Heart right ventricle (tissue), 16 donors: ENCODE measurements at regions of chr12 and their contacts with region 1.

Region 1: DNA sequence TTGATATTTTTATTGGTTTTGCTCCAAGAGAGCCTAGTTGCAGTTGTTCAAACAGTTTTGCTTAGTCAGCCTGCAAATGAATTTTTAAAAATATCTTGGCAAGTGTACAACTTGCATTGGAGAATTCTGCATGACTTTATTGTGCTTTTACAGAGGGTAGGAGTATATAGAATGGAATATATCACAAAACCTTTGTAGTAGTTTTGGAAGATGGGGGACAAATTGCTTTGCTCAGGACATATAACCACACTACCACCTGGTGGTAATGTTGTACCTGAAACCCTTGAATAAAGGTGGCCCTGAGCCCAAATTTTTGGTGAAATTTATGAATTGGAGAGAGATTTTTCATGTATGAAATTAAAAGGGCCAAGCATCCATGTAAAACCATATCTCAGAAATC is 645.2 kb downstream of the MED13L start:
- DNase-seq: no peak
- ATAC-seq: no peak
- H3K4me3 ChIP-seq: no peak overlapping the region
- H3K27ac ChIP-seq: no peak overlapping the region
- H3K4me1 ChIP-seq: peaks cover 0 to 9% (median 0%) of the 10 kb centered on the region in 9 donors
- H3K27me3 ChIP-seq: no peaks in the 10 kb centered on the region
- CTCF ChIP-seq: peak in 7 of 9 donors; percentile 20 to 58 (median 41)

Region 2: DNA sequence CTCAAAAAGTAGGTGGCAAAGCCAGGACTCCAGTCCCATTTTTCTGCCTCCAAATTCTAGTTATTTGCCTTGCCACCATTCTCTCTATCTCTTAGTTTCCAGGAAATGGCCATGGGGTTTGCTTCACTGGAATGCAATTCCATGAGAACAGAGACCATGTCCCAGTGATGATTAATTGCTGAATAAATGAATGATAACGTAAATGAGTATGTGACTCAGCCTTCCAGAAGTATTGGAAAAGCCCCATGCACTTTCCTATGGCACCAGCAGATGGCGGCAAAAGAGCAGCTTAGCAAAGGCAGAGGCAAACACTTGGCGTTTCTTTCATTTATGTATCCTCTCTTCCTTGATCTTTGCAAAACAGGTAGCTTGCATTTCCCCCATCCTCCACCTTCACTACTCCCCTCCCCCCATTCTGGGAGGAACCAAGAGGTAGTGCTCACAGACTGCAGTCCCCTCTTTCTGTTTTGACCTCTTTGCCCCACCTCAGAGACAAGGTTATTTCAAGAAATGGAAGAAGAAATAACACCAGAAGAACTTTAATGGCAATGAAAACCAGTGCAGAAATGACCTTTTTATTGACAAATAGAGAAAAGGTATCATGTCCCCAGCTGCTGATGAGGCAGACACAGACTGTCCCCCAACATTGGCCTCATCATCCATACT is 969.7 kb before region 1 on chr12:
- intact Hi-C with region 1: loop called in 8 of 10 experiments (anchors 5 to 10 kb)
- DNase-seq: peak; percentile 72 to 73
- ATAC-seq: peak in 3 of 8 donors; percentile 46 to 50 (median 49)
- H3K4me3 ChIP-seq: no peak overlapping the region
- H3K27ac ChIP-seq: no peak overlapping the region
- H3K4me1 ChIP-seq: peaks cover 0 to 19% (median 13%) of the 10 kb centered on the region in 9 donors
- H3K27me3 ChIP-seq: peaks cover 6 to 78% (median 61%) of the 10 kb centered on the region in 7 donors
- CTCF ChIP-seq: peak in 8 of 9 donors; percentile 87 to 99 (median 96)

Region 3: GRCh38 chr12:114668151-114668885 is 964.0 kb before region 1 on chr12:
- intact Hi-C with region 1: loop called (anchors 5 to 10 kb)
- DNase-seq: peak; percentile 78 to 81
- ATAC-seq: peak; percentile 88 to 94 (median 92)
- H3K4me3 ChIP-seq: peak overlapping the region in 9 of 10 donors; percentile 33 to 54 (median 50)
- H3K27ac ChIP-seq: peak overlapping the region in 6 of 10 donors; percentile 22 to 48 (median 31)
- H3K4me1 ChIP-seq: peaks cover 2 to 43% (median 18%) of the 10 kb centered on the region in 9 donors
- H3K27me3 ChIP-seq: peaks cover 6 to 100% (median 51%) of the 10 kb centered on the region in 7 donors
- CTCF ChIP-seq: peak; percentile 39 to 79 (median 65)

Region 4: DNA sequence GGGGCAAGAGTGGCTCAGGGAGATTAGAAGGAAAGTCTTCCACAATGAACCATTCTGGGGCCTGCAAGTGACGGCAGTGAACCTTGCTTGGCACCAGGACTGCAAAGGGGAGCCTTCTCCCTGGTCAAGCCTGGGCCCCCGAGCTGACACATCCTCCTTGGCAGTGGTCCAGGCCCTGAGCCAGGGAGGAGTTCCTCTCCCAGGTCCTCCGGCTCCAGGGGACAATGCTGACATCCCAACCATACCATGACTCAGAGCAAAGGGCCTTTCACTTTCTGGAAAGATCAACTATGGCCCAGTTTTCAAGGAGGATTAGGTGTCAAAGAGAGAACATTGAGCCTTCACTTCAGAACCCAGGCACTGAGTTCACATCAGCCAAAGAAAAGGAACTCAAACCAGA is 191.9 kb before region 1 on chr12:
- intact Hi-C with region 1: loop called in 2 of 10 experiments (anchors 10 kb)
- DNase-seq: peak; percentile 64 to 65
- ATAC-seq: peak; percentile 25 to 74 (median 55)
- H3K4me3 ChIP-seq: no peak overlapping the region
- H3K27ac ChIP-seq: peak overlapping the region in 6 of 10 donors; percentile 50 to 78 (median 61)
- H3K4me1 ChIP-seq: peaks cover 0 to 47% (median 8%) of the 10 kb centered on the region in 9 donors
- H3K27me3 ChIP-seq: peaks cover 0 to 5% (median 0%) of the 10 kb centered on the region in 7 donors
- CTCF ChIP-seq: no peak

Region 5: GRCh38 chr12:116508145-116509121 is 876.1 kb after region 1 on chr12:
- intact Hi-C with region 1: no loop called
- DNase-seq: peak; percentile 22 to 52
- ATAC-seq: peak; percentile 51 to 89 (median 60)
- H3K4me3 ChIP-seq: peak overlapping the region; percentile 18 to 52 (median 42)
- H3K27ac ChIP-seq: peak overlapping the region in 6 of 10 donors; percentile 13 to 60 (median 40)
- H3K4me1 ChIP-seq: peaks cover 0 to 17% (median 6%) of the 10 kb centered on the region in 9 donors
- H3K27me3 ChIP-seq: peaks cover 0 to 21% (median 0%) of the 10 kb centered on the region in 7 donors
- CTCF ChIP-seq: no peak